Motor neuron (in vitro differentiated cells): ENCODE measurements at regions of chr9 and their contacts with region 1.

Region 1: GRCh38 chr9:115591584-115591984 is 473.6 kb upstream of the TNC start:
- ATAC-seq: peak; percentile 20 to 97 (median 82)
- H3K4me3 ChIP-seq: no peak overlapping the region
- H3K27ac ChIP-seq: no peak overlapping the region
- H3K4me1 ChIP-seq: peaks cover 5 to 10% of the 10 kb centered on the region in 2 donors

Region 2: DNA sequence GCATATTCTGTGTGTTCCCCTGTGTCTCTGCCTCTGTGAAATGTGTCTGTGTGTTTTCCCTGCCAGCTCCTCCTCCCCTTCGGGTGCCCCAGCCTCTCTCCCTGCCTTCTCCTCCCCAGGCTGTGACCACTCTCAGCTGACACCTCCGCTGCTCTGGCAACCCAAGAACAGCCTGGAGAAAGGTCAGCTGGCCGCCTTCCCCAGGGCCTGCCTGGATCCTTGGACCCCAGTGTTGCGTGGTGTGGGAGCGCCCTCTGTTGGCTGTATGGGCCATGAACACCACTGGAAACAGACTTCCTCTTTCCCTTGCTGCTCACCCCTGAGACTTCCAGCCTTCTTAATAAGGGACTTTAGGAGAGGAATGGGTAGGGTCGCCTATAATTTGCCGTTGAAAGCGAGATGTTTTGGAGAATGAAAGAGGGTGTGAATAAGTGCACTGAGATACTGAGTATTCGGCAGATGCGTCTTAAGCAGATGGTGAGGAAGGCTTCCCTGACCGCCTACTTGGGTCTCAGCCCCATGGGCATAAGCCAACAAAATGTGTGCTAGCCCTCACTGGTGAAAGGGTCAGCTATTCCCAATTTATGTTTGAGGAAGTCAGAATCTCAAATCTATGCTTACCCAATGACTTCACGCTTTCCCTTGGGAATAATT is 980.6 kb after region 1 on chr9:
- in situ Hi-C with region 1: loop called in 2 of 9 experiments (anchors 10 to 25 kb)
- ATAC-seq: peak; percentile 68 to 100 (median 100)
- H3K4me3 ChIP-seq: no peak overlapping the region
- H3K27ac ChIP-seq: peak overlapping the region in 1 of 2 donors; percentile 1
- H3K4me1 ChIP-seq: peaks cover 19 to 20% of the 10 kb centered on the region in 2 donors

Region 3: GRCh38 chr9:116661037-116661954 is 1069.7 kb after region 1 on chr9:
- in situ Hi-C with region 1: loop called in 5 of 9 experiments (anchors 10 to 25 kb)
- ATAC-seq: peak; percentile 85 to 98 (median 90)
- H3K4me3 ChIP-seq: no peak overlapping the region
- H3K27ac ChIP-seq: no peak overlapping the region
- H3K4me1 ChIP-seq: peaks cover 3 to 17% of the 10 kb centered on the region in 2 donors